Head of caudate nucleus (tissue), 42 donors: ENCODE measurements at regions of chr15 and their contacts with region 1.

Region 1: GRCh38 chr15:65318870-65319356 is 14.4 kb downstream of the RNU5B-1 start:
- DNase-seq: peak; percentile 62 to 95 (median 86)

Region 2: DNA sequence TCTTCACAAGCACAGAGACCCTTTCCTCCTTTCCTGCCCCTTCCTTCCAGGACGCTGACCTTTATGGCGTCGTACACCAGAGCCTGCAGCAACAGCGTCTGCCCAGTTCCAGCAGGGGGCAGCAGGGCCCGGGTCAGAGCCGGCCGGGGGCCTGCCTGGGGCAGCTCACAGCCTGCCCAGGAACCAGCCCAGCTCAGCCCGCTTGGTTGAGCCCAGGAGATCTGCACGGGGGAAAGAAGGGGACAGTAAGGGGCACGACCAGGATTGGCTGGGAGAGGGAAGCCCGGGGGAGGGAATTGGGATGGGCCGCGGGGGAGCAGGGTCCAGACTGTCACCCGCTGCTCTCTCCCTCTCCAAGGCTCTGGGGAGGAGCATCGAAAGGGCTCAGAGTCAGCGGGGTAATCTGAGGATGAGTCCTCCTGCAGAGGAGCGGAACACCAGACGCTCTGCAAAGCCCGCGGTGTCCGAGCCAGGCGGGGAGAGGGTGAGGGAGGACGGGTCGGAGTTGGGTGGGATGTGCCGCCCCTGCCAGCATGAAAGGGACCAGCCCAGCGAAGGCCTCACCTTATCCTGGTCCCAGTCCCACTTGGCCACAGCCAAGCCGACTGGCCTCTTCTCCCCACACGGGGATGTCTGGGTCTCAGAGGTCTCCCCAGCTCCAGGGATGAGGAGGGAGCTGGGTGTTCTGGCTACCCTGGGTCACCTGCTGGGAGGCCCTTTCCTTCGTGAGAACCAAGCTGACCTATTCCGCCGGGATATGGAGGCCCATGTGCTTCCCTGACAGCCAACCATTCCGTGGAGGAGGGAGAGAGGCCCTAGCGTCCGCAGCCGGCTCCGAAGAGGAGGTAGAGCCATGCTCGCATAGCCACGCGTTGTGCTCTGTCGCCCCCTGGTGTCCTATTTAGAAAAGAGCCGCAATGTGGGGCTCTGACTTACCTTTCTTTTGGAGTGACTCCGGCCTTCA is 66.3 kb after region 1 on chr15:
- intact Hi-C with region 1: loop called (anchors 2 kb)
- DNase-seq: peak; percentile 79 to 96 (median 89)

Region 3: GRCh38 chr15:65927545-65927944 is 608.6 kb after region 1 on chr15:
- intact Hi-C with region 1: no loop called
- DNase-seq: no peak